ENCODE measurements at regions of chr2 and their contacts with region 1.

Region 1: DNA sequence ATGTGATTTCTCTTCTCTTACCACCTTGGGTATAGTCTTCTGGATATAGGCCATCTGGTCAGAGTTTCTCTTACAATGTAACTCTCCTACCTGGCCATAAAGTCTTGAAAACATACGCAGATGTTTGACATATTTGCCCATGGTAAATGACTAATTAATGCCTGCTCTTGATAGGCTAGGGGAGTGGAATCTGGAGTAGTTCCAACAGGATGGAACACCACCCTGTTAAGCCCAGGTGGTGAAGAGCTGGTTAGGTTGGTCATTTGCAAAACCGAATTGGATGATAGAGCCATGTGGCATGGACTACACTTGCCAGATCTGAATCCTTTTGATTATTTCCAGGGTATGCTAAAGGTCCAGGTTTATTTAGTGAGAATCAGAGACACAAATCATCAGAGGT is 36.5 kb downstream of the HADHB start:
- DNase-seq: no peak
- ATAC-seq: no peak
- H3K4me3 Mint-ChIP-seq: no peak overlapping the region
- H3K27ac Mint-ChIP-seq: no peak overlapping the region
- H3K4me1 Mint-ChIP-seq: no peaks in the 10 kb centered on the region
- H3K27me3 Mint-ChIP-seq: no peaks in the 10 kb centered on the region
- CTCF ChIP-seq: no peak

Region 2: DNA sequence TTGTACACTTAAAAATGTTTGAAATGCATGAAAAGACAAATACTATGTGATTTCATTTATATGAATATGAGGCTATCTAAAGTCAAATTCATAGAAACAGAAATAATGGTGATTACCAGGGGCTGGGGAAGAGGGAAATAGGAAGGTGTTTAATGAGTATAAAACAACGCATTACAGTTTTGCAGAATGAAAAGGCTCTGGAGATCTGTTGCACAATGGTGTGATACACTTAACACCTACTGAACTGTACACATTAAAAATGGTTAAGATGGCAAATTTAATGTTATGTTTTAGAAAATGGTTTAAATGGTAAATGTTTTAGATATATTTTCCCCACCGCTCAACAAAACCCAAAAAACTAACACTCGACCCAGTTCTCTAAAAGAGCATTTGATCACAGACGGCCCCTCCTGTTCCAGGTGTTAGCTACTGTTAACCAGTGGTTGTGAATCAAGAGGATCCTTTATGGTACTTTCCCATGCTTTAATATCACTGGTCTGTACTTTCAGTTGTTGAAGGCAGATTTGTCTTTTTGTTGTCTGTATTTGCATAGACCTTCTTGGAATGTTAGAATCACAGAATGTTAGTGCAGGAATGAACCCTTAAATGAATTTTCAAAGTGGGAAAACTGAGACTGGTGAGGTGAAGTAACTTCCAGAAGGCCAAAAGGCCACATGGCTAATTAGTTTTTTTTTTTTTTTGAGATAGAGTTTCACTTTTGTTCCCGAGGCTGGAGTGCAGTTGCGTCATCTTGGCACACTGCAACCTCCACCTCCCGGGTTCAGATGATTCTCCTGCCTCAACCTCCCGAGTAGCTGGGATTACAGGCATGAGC is 237.1 kb before region 1 on chr2:
- CTCF ChIA-PET with region 1: no interaction called
- POLR2A ChIA-PET with region 1: interaction called, 10 read pairs
- intact Hi-C with region 1: no loop called
- DNase-seq: no peak
- ATAC-seq: peak; percentile 45
- H3K4me3 Mint-ChIP-seq: peak overlapping the region; percentile 26
- H3K27ac Mint-ChIP-seq: peak overlapping the region; percentile 50
- H3K4me1 Mint-ChIP-seq: peaks cover 66% of the 10 kb centered on the region
- H3K27me3 Mint-ChIP-seq: no peaks in the 10 kb centered on the region
- CTCF ChIP-seq: no peak

Measured in activated B cell treated with CpG ODN at 0.5 μM for 24 hours (primary cell).